Mammary epithelial cell (primary cell): ENCODE measurements at regions of chr2 and their contacts with region 1.

Region 1: DNA sequence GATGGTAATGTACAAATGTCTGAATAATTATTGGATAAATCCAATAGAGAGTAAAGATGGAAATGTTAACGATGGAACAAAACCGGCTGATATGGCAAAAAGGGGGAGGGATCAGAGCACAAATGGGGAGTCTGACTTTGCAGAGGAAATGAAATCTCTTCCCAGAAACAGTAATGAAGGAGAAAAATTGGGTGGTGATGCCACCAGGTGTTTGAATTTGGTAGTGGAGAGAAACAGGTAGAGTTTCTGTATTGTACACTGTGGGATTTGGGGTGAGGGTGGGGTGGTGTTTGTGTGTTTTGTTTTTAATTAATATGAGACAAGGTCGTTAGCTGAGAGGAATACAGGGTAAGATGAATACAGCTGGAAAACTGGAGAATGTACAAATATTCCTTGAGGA is 20.4 kb upstream of the XDH start:
- DNase-seq: peak; percentile 44
- H3K4me3 ChIP-seq: no peak overlapping the region
- H3K27ac ChIP-seq: no peak overlapping the region
- H3K4me1 ChIP-seq: peaks cover 19% of the 10 kb centered on the region
- H3K27me3 ChIP-seq: no peaks in the 10 kb centered on the region
- CTCF ChIP-seq: peak; percentile 59 to 73

Region 2: DNA sequence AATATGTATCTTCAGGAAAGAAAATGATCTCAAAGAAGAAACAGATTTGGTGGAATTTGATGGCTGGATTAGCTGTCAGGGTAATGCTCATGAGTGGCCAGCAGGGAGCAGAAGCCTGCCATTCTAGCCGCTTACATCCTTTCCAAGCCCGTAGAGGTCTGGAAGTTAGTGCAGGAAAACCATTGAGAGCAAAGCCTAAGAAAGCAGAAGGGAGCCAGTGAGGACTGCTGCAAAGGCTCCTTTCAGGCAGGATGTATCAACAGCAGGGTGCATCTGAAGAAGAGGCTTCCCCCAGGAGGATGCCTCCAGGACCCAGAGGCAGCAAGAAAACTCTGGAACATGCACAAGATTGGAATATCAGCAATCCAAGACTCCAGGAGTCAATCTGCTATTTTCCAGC is 1226.5 kb before region 1 on chr2:
- CTCF ChIA-PET with region 1: no interaction called
- dilution Hi-C with region 1: no loop called
- in situ Hi-C with region 1: no loop called
- intact Hi-C with region 1: loop called (anchors 5 kb)
- DNase-seq: peak; percentile 39
- H3K4me3 ChIP-seq: no peak overlapping the region
- H3K27ac ChIP-seq: no peak overlapping the region
- H3K4me1 ChIP-seq: no peaks in the 10 kb centered on the region
- H3K27me3 ChIP-seq: peaks cover 9% of the 10 kb centered on the region
- CTCF ChIP-seq: peak; percentile 88 to 90

Region 3: GRCh38 chr2:31138037-31138962 is 296.6 kb before region 1 on chr2 and contains the start of gene GALNT14:
- CTCF ChIA-PET with region 1: no interaction called
- dilution Hi-C with region 1: no loop called
- in situ Hi-C with region 1: no loop called
- intact Hi-C with region 1: loop called (anchors 2 kb)
- DNase-seq: peak; percentile 82
- H3K4me3 ChIP-seq: peak within 1 kb of the TSS; percentile 71 to 88 (median 80)
- H3K27ac ChIP-seq: peak within 1 kb of the TSS; percentile 59
- H3K4me1 ChIP-seq: no peaks in the 10 kb centered on the region
- H3K27me3 ChIP-seq: no peaks in the 10 kb centered on the region
- CTCF ChIP-seq: peak; percentile 52 to 72
- total RNA-seq, gene GALNT14: 12.7 to 29.9 TPM

Region 4: DNA sequence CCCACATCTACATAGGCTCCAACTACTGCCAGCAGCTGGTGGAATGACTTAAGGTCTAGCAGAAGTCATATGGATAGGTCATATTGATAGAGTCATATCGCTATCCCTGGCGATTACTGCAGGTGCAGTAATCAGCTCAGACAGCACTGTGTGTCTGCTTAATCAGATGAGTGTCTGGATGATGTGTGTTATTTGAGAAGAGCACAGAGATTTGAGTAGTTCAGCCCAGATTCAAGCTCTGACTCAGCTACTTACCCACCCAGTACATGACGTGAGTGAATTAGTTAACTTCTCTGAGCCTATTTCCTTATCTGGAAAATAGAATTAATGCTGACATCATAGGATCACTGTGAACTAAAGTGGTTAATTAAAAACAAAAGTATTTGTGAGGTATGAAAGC is 122.0 kb before region 1 on chr2:
- CTCF ChIA-PET with region 1: no interaction called
- dilution Hi-C with region 1: no loop called
- in situ Hi-C with region 1: no loop called
- intact Hi-C with region 1: no loop called
- DNase-seq: no peak
- H3K4me3 ChIP-seq: no peak overlapping the region
- H3K27ac ChIP-seq: no peak overlapping the region
- H3K4me1 ChIP-seq: no peaks in the 10 kb centered on the region
- H3K27me3 ChIP-seq: no peaks in the 10 kb centered on the region
- CTCF ChIP-seq: no peak

Region 5: GRCh38 chr2:31354837-31355236 is 80.1 kb before region 1 on chr2:
- CTCF ChIA-PET with region 1: no interaction called
- dilution Hi-C with region 1: no loop called
- in situ Hi-C with region 1: no loop called
- intact Hi-C with region 1: loop called (anchors 1 kb)
- DNase-seq: no peak
- H3K4me3 ChIP-seq: no peak overlapping the region
- H3K27ac ChIP-seq: no peak overlapping the region
- H3K4me1 ChIP-seq: no peaks in the 10 kb centered on the region
- H3K27me3 ChIP-seq: no peaks in the 10 kb centered on the region
- CTCF ChIP-seq: peak; percentile 45 to 52

Region 6: DNA sequence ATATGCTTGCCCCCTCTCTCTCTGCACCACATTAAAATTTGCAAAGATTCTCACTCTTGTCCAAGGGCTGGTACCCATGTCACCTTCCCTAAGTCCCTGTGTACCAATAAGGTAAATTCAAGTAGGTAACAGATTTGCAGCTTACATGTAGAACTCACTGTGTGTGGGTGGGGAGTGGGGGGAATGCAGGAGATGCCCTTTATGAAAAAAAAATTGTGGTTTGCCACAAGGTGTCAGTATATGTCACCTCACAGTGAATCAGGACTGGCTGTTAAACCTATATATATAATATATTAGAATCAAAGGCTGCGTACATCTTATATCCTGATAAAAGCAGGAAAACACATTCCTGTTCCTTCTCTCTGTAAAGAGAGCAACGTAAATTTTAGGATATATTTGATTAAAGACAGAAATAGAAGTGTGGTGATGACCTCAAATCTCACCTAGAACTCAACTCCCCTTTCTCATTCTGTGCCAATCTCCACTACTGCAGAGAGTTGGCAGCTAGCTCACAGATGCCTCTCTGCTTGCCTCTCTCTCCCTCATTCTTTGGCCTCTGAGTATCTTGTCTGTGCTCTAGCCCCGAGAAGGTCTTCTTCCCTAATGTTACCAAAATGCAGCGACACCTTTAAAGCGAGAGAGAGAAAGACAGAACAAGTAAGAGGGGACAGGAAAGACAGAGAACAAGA is 20.9 kb before region 1 on chr2:
- CTCF ChIA-PET with region 1: no interaction called
- dilution Hi-C with region 1: no loop called
- in situ Hi-C with region 1: no loop called
- intact Hi-C with region 1: loop called (anchors 1 kb)
- DNase-seq: no peak
- H3K4me3 ChIP-seq: peak overlapping the region; percentile 32 to 53 (median 38)
- H3K27ac ChIP-seq: peak overlapping the region; percentile 49
- H3K4me1 ChIP-seq: peaks cover 37% of the 10 kb centered on the region
- H3K27me3 ChIP-seq: no peaks in the 10 kb centered on the region
- CTCF ChIP-seq: peak in 1 of 2 donors; percentile 45